Left colon (tissue), 2 donors: ENCODE measurements at regions of chr22 and their contacts with region 1.

Region 1: GRCh38 chr22:21942407-21943343 is 10.0 kb downstream of the PPM1F start:
- DNase-seq: peak; percentile 43 to 49
- ATAC-seq: no peak

Region 2: GRCh38 chr22:21712894-21713712 is 229.6 kb before region 1 on chr22:
- intact Hi-C with region 1: loop called in 1 of 2 experiments (anchors 10 kb)
- DNase-seq: peak; percentile 47 to 60
- ATAC-seq: peak; percentile 96

Region 3: GRCh38 chr22:22248878-22249277 is 306.2 kb after region 1 on chr22:
- intact Hi-C with region 1: no loop called
- DNase-seq: no peak
- ATAC-seq: no peak